A673 (cell line): ENCODE measurements at regions of chr18 and their contacts with region 1.

Region 1: DNA sequence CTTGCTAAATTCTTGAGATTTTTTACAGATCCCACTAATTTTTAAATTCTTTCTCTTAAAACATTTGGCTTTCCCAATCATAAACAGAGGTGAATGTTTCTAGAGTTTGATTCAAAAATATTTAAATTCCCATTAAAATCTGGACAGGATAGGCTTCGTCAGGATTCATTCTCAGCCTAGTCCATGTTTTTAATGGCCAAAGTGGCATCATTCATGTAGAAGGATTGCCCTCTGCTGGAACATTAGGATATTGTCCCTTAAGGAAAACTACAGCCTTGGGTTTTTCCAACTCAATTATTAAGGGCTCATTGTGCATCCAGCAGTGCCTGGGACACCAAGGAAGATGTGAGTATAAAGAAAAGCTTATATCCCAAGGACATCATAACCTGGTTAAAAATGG is 71.7 kb downstream of the TPGS2 start:
- DNase-seq: peak; percentile 58
- H3K4me3 ChIP-seq: no peak overlapping the region
- H3K27ac ChIP-seq: no peak overlapping the region
- H3K4me1 ChIP-seq: no peaks in the 10 kb centered on the region
- H3K27me3 ChIP-seq: peaks cover 3% of the 10 kb centered on the region
- CTCF ChIP-seq: peak; percentile 71

Region 2: GRCh38 chr18:36284671-36285295 is 472.3 kb before region 1 on chr18:
- CTCF ChIA-PET with region 1: no interaction called
- POLR2A ChIA-PET with region 1: no interaction called
- intact Hi-C with region 1: loop called (anchors 10 kb)
- DNase-seq: peak; percentile 73
- H3K4me3 ChIP-seq: no peak overlapping the region
- H3K27ac ChIP-seq: no peak overlapping the region
- H3K4me1 ChIP-seq: no peaks in the 10 kb centered on the region
- H3K27me3 ChIP-seq: peaks cover 30% of the 10 kb centered on the region
- CTCF ChIP-seq: peak; percentile 84

Region 3: DNA sequence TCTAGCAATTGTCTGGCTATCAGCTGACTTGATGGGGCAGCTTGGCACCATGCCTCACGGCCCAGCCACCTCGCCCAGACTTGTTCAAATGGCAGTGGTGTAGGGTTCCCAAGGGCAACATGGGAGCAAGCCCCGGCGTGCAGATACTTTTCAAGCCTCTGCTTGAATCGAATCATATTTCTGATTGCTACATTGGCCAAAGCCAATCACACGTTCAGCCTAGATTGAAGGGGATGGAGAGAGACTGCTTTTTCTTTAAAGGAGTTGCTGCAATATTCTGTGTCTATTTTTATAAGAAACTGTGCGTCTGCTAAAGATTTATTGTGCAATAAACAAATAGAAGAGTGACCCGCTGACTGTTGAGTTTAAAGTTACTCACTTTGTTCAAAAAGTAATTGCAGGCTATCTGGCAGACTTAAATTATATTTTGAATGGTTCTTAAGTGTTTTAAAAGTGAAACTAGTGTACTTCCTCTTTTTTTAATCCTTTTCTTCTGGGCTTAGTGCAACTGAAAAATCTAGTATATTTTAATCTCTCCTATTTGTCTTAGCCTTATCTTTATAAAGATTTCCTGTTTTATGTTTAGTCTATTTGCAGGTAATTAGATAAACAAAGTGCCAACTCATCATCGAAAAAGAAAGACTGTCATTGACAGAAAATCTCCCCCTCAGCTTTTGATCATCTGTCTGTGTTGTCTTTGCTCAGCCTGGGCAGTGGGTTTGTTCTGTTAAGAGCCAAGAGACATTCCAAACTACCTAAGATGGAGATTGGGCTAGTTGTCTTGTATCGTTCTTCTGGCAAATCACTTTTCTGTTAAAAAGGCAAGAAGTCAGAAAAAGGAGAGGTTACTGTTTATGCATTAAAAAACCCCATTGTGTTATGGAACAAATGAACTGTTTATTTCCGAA is 84.4 kb before region 1 on chr18:
- CTCF ChIA-PET with region 1: no interaction called
- POLR2A ChIA-PET with region 1: no interaction called
- intact Hi-C with region 1: no loop called
- DNase-seq: peak; percentile 6
- H3K4me3 ChIP-seq: peak overlapping the region; percentile 25
- H3K27ac ChIP-seq: no peak overlapping the region
- H3K4me1 ChIP-seq: no peaks in the 10 kb centered on the region
- H3K27me3 ChIP-seq: peaks cover 19% of the 10 kb centered on the region
- CTCF ChIP-seq: no peak

Region 4: GRCh38 chr18:36688020-36688965 is 68.8 kb before region 1 on chr18:
- CTCF ChIA-PET with region 1: interaction called, 5 read pairs
- POLR2A ChIA-PET with region 1: no interaction called
- intact Hi-C with region 1: loop called (anchors 1 kb)
- DNase-seq: peak; percentile 73
- H3K4me3 ChIP-seq: no peak overlapping the region
- H3K27ac ChIP-seq: no peak overlapping the region
- H3K4me1 ChIP-seq: no peaks in the 10 kb centered on the region
- H3K27me3 ChIP-seq: peaks cover 37% of the 10 kb centered on the region
- CTCF ChIP-seq: peak; percentile 84